Calu3 (cell line): ENCODE measurements at regions of chr13 and their contacts with region 1.

Region 1: GRCh38 chr13:47774671-47774994 is 226.4 kb downstream of the SUCLA2 start:
- DNase-seq: no peak
- H3K4me3 Mint-ChIP-seq: no peak overlapping the region
- H3K27ac Mint-ChIP-seq: no peak overlapping the region
- H3K4me1 Mint-ChIP-seq: no peaks in the 10 kb centered on the region
- H3K27me3 Mint-ChIP-seq: no peaks in the 10 kb centered on the region
- CTCF ChIP-seq: no peak

Region 2: DNA sequence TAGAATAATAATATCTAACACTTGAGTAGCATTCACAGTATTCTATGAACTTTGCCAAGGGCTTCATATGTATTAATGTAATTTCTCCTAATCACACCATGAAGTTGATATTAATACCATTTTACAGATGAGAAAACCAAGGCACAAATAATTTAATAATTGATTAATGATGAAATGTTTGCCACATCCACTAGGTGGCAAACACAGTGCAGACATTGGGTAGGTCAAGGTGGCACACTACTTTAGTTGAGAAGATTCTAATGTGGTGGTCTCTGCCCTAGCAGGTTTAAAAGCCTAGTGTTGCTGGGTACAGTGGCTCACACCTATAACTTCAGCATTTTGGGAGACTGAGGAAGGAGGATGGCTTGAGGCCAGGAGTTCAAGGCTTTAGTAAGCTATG is 186.0 kb before region 1 on chr13:
- CTCF ChIA-PET with region 1: no interaction called
- intact Hi-C with region 1: loop called (anchors 1 kb)
- DNase-seq: no peak
- H3K4me3 Mint-ChIP-seq: no peak overlapping the region
- H3K27ac Mint-ChIP-seq: no peak overlapping the region
- H3K4me1 Mint-ChIP-seq: no peaks in the 10 kb centered on the region
- H3K27me3 Mint-ChIP-seq: no peaks in the 10 kb centered on the region
- CTCF ChIP-seq: no peak

Region 3: DNA sequence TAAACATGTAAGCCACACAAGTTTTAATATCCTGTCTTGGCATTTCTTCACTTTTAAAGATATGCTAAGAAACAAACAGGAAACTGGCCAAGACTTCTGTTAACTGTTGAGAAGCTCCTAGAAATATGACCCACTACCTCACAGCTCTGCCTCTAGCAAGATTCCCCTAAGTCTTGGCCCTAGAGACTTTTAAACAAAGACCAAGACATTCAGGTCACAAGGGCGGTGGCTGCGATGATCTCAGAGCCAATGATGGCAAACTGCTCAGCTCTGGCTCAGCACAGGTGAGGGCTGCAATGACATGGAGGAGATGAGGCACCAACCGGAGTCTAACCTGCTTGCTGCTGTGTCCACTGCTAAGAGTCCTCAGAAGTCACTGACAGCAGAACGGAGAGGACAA is 111.7 kb after region 1 on chr13:
- CTCF ChIA-PET with region 1: no interaction called
- intact Hi-C with region 1: no loop called
- DNase-seq: no peak
- H3K4me3 Mint-ChIP-seq: no peak overlapping the region
- H3K27ac Mint-ChIP-seq: no peak overlapping the region
- H3K4me1 Mint-ChIP-seq: no peaks in the 10 kb centered on the region
- H3K27me3 Mint-ChIP-seq: no peaks in the 10 kb centered on the region
- CTCF ChIP-seq: no peak